Transverse colon (tissue), 4 donors: ENCODE measurements at regions of chr3 and their contacts with region 1.

Region 1: GRCh38 chr3:94004301-94004910 is 24.0 kb downstream of the STX19 start:
- DNase-seq: no peak
- H3K4me3 ChIP-seq: peak overlapping the region in 1 of 4 donors; percentile 26
- H3K27ac ChIP-seq: peak overlapping the region in 1 of 4 donors; percentile 35
- H3K4me1 ChIP-seq: peaks cover 0 to 13% (median 2%) of the 10 kb centered on the region in 4 donors
- H3K27me3 ChIP-seq: no peaks in the 10 kb centered on the region
- CTCF ChIP-seq: peak; percentile 63 to 80 (median 76)
- EP300 ChIP-seq: no peak
- POLR2A ChIP-seq: no peak

Region 2: GRCh38 chr3:93931597-93932229 is 72.7 kb before region 1 on chr3:
- in situ Hi-C with region 1: no loop called
- intact Hi-C with region 1: no loop called
- DNase-seq: no peak
- H3K4me3 ChIP-seq: no peak overlapping the region
- H3K27ac ChIP-seq: no peak overlapping the region
- H3K4me1 ChIP-seq: no peaks in the 10 kb centered on the region
- H3K27me3 ChIP-seq: no peaks in the 10 kb centered on the region
- CTCF ChIP-seq: no peak
- EP300 ChIP-seq: no peak
- POLR2A ChIP-seq: no peak

Region 3: DNA sequence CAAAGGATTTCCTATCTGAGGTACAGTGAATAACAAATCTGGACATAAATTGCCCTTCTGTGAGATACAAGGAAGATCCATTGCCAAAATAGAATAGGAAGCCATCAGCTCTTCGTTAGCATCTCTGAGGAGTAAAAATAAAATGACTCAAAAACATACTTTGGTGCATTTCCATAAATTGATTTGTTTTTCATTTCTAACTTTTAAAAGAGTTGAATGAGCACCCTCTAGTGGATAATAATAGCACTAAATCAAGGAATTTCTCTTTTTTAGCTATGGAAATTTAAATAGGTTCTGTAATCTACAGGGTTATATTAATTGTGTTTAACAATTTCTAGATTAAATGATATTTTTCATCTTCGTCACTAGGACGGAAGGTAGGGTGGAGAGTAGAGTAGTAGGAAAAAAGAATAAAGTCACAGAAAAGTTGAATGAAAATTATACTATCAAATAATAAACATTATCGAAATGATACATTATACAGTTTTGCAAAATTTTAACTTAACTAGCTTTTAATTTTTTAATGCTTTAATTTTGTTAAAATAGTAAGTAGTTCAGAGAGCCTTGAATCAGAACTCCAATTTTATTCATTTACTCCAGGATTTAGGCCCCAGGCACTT is 64.9 kb after region 1 on chr3:
- in situ Hi-C with region 1: no loop called
- intact Hi-C with region 1: loop called (anchors 5 kb)
- DNase-seq: no peak
- H3K4me3 ChIP-seq: no peak overlapping the region
- H3K27ac ChIP-seq: no peak overlapping the region
- H3K4me1 ChIP-seq: peaks cover 2 to 38% (median 13%) of the 10 kb centered on the region in 4 donors
- H3K27me3 ChIP-seq: no peaks in the 10 kb centered on the region
- CTCF ChIP-seq: peak; percentile 42 to 69 (median 56)
- EP300 ChIP-seq: no peak
- POLR2A ChIP-seq: no peak

Region 4: DNA sequence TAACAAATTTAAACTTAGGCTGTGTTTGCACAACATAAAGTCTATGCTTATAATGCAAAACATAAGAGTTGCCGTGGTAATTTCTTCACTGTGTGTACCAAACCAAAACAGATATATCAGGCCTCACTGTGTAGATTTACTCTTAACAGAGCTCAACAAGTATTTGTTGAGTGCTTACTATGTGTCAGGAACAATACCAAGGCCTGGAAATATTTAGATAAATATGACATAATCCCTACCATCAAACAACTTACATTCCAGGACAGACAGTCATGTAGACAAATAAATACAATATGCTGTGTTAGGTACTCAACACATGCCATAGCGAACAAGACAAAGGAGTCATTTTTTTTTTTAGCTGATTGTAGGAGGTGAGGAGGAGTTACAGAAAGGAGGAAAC is 612.4 kb after region 1 on chr3:
- in situ Hi-C with region 1: no loop called
- intact Hi-C with region 1: no loop called
- DNase-seq: no peak
- H3K4me3 ChIP-seq: no peak overlapping the region
- H3K27ac ChIP-seq: no peak overlapping the region
- H3K4me1 ChIP-seq: no peaks in the 10 kb centered on the region
- H3K27me3 ChIP-seq: no peaks in the 10 kb centered on the region
- CTCF ChIP-seq: no peak
- EP300 ChIP-seq: no peak
- POLR2A ChIP-seq: no peak